Adrenal gland (tissue), 19 donors: ENCODE measurements at regions of chr9 and their contacts with region 1.

Region 1: GRCh38 chr9:91898451-91899218 is 51.4 kb downstream of the ROR2 start:
- DNase-seq: peak; percentile 63 to 89 (median 72)
- H3K4me3 ChIP-seq: no peak overlapping the region
- H3K27ac ChIP-seq: peak overlapping the region; percentile 40 to 89 (median 80)
- H3K4me1 ChIP-seq: peaks cover 25 to 59% of the 10 kb centered on the region in 2 donors
- H3K27me3 ChIP-seq: no peaks in the 10 kb centered on the region
- CTCF ChIP-seq: no peak
- POLR2A ChIP-seq: peak in 1 of 2 donors; percentile 63

Region 2: DNA sequence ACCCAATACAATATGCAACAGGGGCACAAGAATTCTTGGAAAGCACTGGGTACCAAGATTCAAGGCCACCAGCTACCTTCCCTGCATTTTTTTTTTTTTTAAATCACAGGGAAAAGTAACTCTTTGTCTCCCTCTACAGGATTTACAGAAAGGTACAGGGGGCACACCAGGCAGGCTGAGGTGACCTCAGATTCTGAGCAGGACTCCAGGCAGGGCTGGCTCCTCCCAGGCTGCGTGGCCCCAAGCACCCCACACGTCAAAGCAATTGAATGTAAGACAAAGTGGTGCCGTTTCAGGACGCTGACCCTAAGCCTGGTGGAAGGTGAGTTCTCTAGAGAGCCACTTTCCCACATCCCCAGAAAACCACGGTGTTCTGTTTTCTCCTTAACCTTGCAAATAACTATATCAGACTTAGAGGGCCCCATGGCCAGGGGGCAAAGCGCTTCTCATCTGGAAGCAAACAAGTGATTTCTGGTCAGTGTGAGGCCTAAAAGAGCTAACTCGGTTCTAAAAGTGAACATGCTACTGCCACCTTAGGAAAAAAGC is 171.2 kb before region 1 on chr9:
- intact Hi-C with region 1: no loop called
- DNase-seq: peak in 5 of 7 donors; percentile 38 to 64 (median 48)
- H3K4me3 ChIP-seq: no peak overlapping the region
- H3K27ac ChIP-seq: no peak overlapping the region
- H3K4me1 ChIP-seq: no peaks in the 10 kb centered on the region
- H3K27me3 ChIP-seq: no peaks in the 10 kb centered on the region
- CTCF ChIP-seq: peak; percentile 53 to 70 (median 64)
- POLR2A ChIP-seq: no peak

Region 3: GRCh38 chr9:91847581-91848091 is 51.0 kb before region 1 on chr9:
- intact Hi-C with region 1: loop called in 1 of 2 experiments (anchors 10 kb)
- DNase-seq: peak in 1 of 7 donors; percentile 51
- H3K4me3 ChIP-seq: no peak overlapping the region
- H3K27ac ChIP-seq: no peak overlapping the region
- H3K4me1 ChIP-seq: peaks cover 13 to 20% of the 10 kb centered on the region in 2 donors
- H3K27me3 ChIP-seq: no peaks in the 10 kb centered on the region
- CTCF ChIP-seq: no peak
- POLR2A ChIP-seq: no peak